GM12878 (cell line): ENCODE measurements at regions of chr17 and their contacts with region 1.

Region 1: GRCh38 chr17:79707931-79708891 is 22.5 kb upstream of the ENPP7 start:
- DNase-seq: no peak
- ATAC-seq: peak; percentile 79
- H3K4me3 ChIP-seq: no peak overlapping the region
- H3K27ac ChIP-seq: no peak overlapping the region
- H3K4me1 ChIP-seq: no peaks in the 10 kb centered on the region
- H3K27me3 ChIP-seq: no peaks in the 10 kb centered on the region
- CTCF ChIP-seq: peak; percentile 65 to 74 (median 72)
- EP300 ChIP-seq: no peak
- POLR2A ChIP-seq: no peak
- RAD21 ChIP-seq: peak; percentile 71

Region 2: GRCh38 chr17:79400989-79401703 is 307.1 kb before region 1 on chr17:
- CTCF ChIA-PET with region 1: interaction called, 5 read pairs
- POLR2A ChIA-PET with region 1: no interaction called
- RAD21 ChIA-PET with region 1: interaction called, 5 read pairs
- SMC1A ChIA-PET with region 1: interaction called, 3 read pairs
- in situ Hi-C with region 1: no loop called
- intact Hi-C with region 1: loop called (anchors 5 kb)
- DNase-seq: no peak
- ATAC-seq: peak; percentile 95
- H3K4me3 ChIP-seq: no peak overlapping the region
- H3K27ac ChIP-seq: no peak overlapping the region
- H3K4me1 ChIP-seq: no peaks in the 10 kb centered on the region; the same call in 1 of the 2 replicates
- H3K27me3 ChIP-seq: peaks cover under 1 to 4% of the 10 kb centered on the region in 2 experiments; a peak in 2 of 4 replicates
- CTCF ChIP-seq: peak; percentile 86 to 92 (median 88)
- EP300 ChIP-seq: no peak
- POLR2A ChIP-seq: no peak
- RAD21 ChIP-seq: peak; percentile 52

Region 3: DNA sequence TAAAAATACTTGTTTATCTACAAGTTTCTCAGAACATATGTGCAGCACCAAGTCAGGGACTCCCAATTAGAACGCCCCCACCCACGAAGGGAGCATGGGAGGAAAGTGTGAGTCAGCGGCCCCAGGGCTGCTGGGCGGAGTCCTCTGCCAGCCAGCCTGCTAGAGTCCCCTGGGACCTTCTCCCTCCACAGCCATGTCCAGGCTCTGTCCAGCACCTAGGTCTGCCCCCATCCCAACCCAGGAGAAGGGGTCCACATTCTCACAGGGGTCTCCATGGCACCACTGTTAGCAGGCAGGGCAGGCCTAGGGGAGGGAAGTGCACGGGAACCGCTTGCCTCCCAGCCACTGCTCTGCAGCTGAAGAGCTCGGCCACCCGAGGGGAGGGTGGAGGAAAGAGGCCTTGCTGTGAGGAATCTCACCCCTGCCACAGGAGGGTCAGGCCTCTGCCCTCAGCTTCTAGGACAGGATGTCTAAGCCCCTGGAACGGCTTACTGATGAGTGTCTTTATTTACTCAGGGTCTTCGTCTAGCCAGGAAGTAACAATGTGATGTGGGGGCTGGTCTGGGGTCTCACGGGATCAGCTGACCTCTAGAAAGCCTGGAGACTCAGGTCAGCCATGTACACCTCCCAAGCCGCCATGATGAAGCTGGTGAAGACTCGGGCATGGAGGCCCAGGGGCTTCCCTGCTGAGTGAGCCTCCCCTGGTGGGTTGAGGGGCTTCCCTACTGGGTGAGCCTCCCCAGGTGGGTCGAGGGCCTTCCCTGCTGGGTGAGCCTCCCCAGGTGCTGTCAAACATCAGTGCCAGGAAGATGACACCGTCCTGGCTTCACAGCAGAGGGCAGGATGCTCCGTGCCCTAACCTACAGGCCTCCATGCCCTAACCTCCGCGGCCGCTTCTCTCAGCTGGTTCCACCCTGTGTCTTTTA is 287.6 kb before region 1 on chr17:
- CTCF ChIA-PET with region 1: no interaction called
- POLR2A ChIA-PET with region 1: no interaction called
- RAD21 ChIA-PET with region 1: no interaction called
- SMC1A ChIA-PET with region 1: no interaction called
- in situ Hi-C with region 1: no loop called
- intact Hi-C with region 1: loop called (anchors 10 kb)
- DNase-seq: no peak
- ATAC-seq: no peak
- H3K4me3 ChIP-seq: no peak overlapping the region
- H3K27ac ChIP-seq: no peak overlapping the region
- H3K4me1 ChIP-seq: no peaks in the 10 kb centered on the region
- H3K27me3 ChIP-seq: peaks cover 0 to 3% of the 10 kb centered on the region in 2 experiments; a peak in 1 of 4 replicates
- CTCF ChIP-seq: no peak
- EP300 ChIP-seq: no peak
- POLR2A ChIP-seq: no peak
- RAD21 ChIP-seq: no peak

Region 4: GRCh38 chr17:79760197-79760906 is 52.1 kb after region 1 on chr17:
- CTCF ChIA-PET with region 1: no interaction called
- POLR2A ChIA-PET with region 1: no interaction called
- RAD21 ChIA-PET with region 1: no interaction called
- SMC1A ChIA-PET with region 1: no interaction called
- in situ Hi-C with region 1: no loop called
- intact Hi-C with region 1: no loop called
- DNase-seq: no peak
- ATAC-seq: peak; percentile 55
- H3K4me3 ChIP-seq: no peak overlapping the region
- H3K27ac ChIP-seq: no peak overlapping the region
- H3K4me1 ChIP-seq: no peaks in the 10 kb centered on the region
- H3K27me3 ChIP-seq: no peaks in the 10 kb centered on the region; a peak in 1 of 4 replicates
- CTCF ChIP-seq: no peak
- EP300 ChIP-seq: no peak
- POLR2A ChIP-seq: no peak
- RAD21 ChIP-seq: no peak